ENCODE measurements at regions of chr11 and their contacts with region 1.

Region 1: GRCh38 chr11:65859200-65859811 is 927 bp upstream of the MUS81 start:
- DNase-seq: peak; percentile 84 to 95 (median 88)
- H3K4me3 ChIP-seq: peak overlapping the region; percentile 59 to 98 (median 92)
- H3K4me3 Mint-ChIP-seq: peak overlapping the region; percentile 91 to 96
- H3K27ac ChIP-seq: peak overlapping the region; percentile 86 to 95
- H3K27ac Mint-ChIP-seq: peak overlapping the region; percentile 91 to 99 (median 97)
- H3K4me1 ChIP-seq: peaks cover 41 to 56% of the 10 kb centered on the region in 2 donors
- H3K4me1 Mint-ChIP-seq: peaks cover 48% of the 10 kb centered on the region
- H3K27me3 ChIP-seq: no peaks in the 10 kb centered on the region
- H3K27me3 Mint-ChIP-seq: peaks cover 0 to 2% (median 1%) of the 10 kb centered on the region in 3 donors
- CTCF ChIP-seq: no peak

Region 2: DNA sequence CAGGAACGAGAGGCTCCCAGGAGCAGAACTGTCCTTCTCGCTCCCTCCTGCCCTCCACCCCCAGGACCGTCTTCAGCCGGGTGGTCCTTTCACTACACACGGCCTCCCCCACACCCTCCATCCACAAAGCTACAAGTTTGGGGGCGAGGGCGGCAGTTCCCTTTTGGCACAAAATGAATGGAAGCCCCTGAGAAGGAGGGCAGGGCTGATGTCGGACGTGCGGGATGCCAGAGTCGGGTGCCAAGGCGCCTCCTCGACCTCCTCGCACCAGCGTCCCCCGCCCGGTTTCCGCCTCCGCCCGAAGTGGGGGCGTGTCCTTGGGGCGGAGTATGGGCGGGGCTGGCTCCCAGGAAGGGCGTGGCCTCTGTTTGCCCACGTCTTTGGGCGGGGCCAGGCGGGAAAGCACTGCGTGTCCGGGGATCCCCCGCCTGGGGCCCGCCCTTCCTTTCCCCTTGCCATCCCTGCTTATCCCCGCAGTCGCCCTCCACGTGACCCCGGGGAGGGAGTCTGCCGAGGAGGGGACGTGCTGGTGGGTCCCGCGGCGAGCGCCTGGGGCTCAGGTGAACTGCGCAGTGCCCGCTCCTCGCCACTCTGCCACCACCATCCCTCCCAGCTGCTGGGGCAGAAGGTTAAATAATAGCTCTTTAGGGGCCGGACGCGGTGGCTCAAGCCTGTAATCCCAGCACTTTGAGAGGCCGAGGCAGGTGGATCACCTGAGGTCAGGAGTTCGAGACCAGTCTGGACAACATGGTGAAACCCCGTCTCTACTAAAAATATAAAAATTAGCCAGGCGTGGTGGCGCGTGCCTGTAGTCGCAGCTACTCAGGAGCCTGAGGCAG is 14.2 kb after region 1 on chr11:
- intact Hi-C with region 1: loop called in 1 of 2 experiments (anchors 2 kb)
- DNase-seq: peak; percentile 92 to 95 (median 92)
- H3K4me3 ChIP-seq: peak overlapping the region; percentile 46 to 79 (median 58)
- H3K4me3 Mint-ChIP-seq: peak overlapping the region; percentile 91 to 97
- H3K27ac ChIP-seq: peak overlapping the region in 1 of 2 donors; percentile 60
- H3K27ac Mint-ChIP-seq: peak overlapping the region; percentile 78 to 96 (median 83)
- H3K4me1 ChIP-seq: peaks cover 20 to 35% of the 10 kb centered on the region in 2 donors
- H3K4me1 Mint-ChIP-seq: peaks cover 24% of the 10 kb centered on the region
- H3K27me3 ChIP-seq: no peaks in the 10 kb centered on the region
- H3K27me3 Mint-ChIP-seq: peaks cover 8 to 30% (median 27%) of the 10 kb centered on the region in 3 donors
- CTCF ChIP-seq: no peak

Measured in CD14-positive monocyte (primary cell).